ENCODE measurements at regions of chr10 and their contacts with region 1.

Region 1: GRCh38 chr10:27525819-27526218 is 21.7 kb downstream of the RAB18 start:
- DNase-seq: peak in 2 of 4 experiments; percentile 31 to 50
- ATAC-seq: peak; percentile 44
- H3K4me3 ChIP-seq: no peak overlapping the region
- H3K27ac ChIP-seq: peak overlapping the region; percentile 91; the same call in 2 of the 3 replicates
- H3K4me1 ChIP-seq: peaks cover 0 to 36% of the 10 kb centered on the region in 2 experiments; a peak in 4 of 5 replicates
- H3K27me3 ChIP-seq: no peaks in the 10 kb centered on the region
- CTCF ChIP-seq: no peak
- EP300 ChIP-seq: no peak
- POLR2A ChIP-seq: no peak
- RAD21 ChIP-seq: no peak

Region 2: GRCh38 chr10:27285108-27285507 is 240.7 kb before region 1 on chr10:
- CTCF ChIA-PET with region 1: no interaction called
- POLR2A ChIA-PET with region 1: no interaction called
- in situ Hi-C with region 1: no loop called
- intact Hi-C with region 1: no loop called
- DNase-seq: peak in 2 of 4 experiments; percentile 19 to 30
- ATAC-seq: peak; percentile 84
- H3K4me3 ChIP-seq: no peak overlapping the region
- H3K27ac ChIP-seq: no peak overlapping the region
- H3K4me1 ChIP-seq: no peaks in the 10 kb centered on the region
- H3K27me3 ChIP-seq: peaks cover 2 to 7% of the 10 kb centered on the region in 2 experiments; a peak in 2 of 5 replicates
- CTCF ChIP-seq: peak in 2 of 3 experiments; percentile 38 to 54; a peak in 5 of 6 replicates
- EP300 ChIP-seq: no peak
- POLR2A ChIP-seq: no peak
- RAD21 ChIP-seq: peak in 1 of 2 experiments; percentile 26; a peak in 2 of 4 replicates

Region 3: GRCh38 chr10:27490807-27491206 is 35.0 kb before region 1 on chr10:
- CTCF ChIA-PET with region 1: no interaction called
- POLR2A ChIA-PET with region 1: no interaction called
- in situ Hi-C with region 1: no loop called
- intact Hi-C with region 1: no loop called
- DNase-seq: no peak
- ATAC-seq: no peak
- H3K4me3 ChIP-seq: no peak overlapping the region
- H3K27ac ChIP-seq: no peak overlapping the region
- H3K4me1 ChIP-seq: no peaks in the 10 kb centered on the region
- H3K27me3 ChIP-seq: no peaks in the 10 kb centered on the region
- CTCF ChIP-seq: no peak
- EP300 ChIP-seq: no peak
- POLR2A ChIP-seq: no peak
- RAD21 ChIP-seq: no peak

Region 4: GRCh38 chr10:27504007-27504807 is 21.6 kb before region 1 on chr10 and contains the start of gene RAB18:
- CTCF ChIA-PET with region 1: no interaction called
- POLR2A ChIA-PET with region 1: interaction called, 7 read pairs
- in situ Hi-C with region 1: no loop called
- intact Hi-C with region 1: loop called (anchors 2 kb)
- DNase-seq: peak; percentile 94 to 99 (median 94)
- ATAC-seq: peak; percentile 96
- H3K4me3 ChIP-seq: peak within 1 kb of the TSS; percentile 80
- H3K27ac ChIP-seq: peak within 1 kb of the TSS; percentile 83
- H3K4me1 ChIP-seq: peaks cover 11 to 13% of the 10 kb centered on the region in 2 experiments; a peak in 3 of 5 replicates
- H3K27me3 ChIP-seq: no peaks in the 10 kb centered on the region
- CTCF ChIP-seq: 0 out of 6 replicates have a peak, but pooled peaks of 2 of the 3 experiments have one; percentile 1 to 18
- EP300 ChIP-seq: peak; percentile 17; the same call in 1 of the 2 replicates
- POLR2A ChIP-seq: peak; percentile 92
- RAD21 ChIP-seq: no peak
- polyA plus RNA-seq, gene RAB18: 38.6 to 46.3 TPM

Measured in K562 (cell line).